Left ventricle myocardium inferior (tissue), 1 donor: ENCODE measurements at regions of chr11 and their contacts with region 1.

Region 1: GRCh38 chr11:25981998-25982397 is 349.9 kb upstream of the ANO3 start:
- DNase-seq: no peak
- H3K4me3 ChIP-seq: no peak overlapping the region
- H3K27ac ChIP-seq: no peak overlapping the region
- H3K4me1 ChIP-seq: no peaks in the 10 kb centered on the region
- H3K27me3 ChIP-seq: no peaks in the 10 kb centered on the region
- CTCF ChIP-seq: peak; percentile 70

Region 2: GRCh38 chr11:26134481-26135355 is 152.7 kb after region 1 on chr11:
- intact Hi-C with region 1: loop called (anchors 2 kb)
- DNase-seq: no peak
- H3K4me3 ChIP-seq: no peak overlapping the region
- H3K27ac ChIP-seq: no peak overlapping the region
- H3K4me1 ChIP-seq: no peaks in the 10 kb centered on the region
- H3K27me3 ChIP-seq: no peaks in the 10 kb centered on the region
- CTCF ChIP-seq: peak; percentile 59

Region 3: GRCh38 chr11:26227296-26227695 is 245.3 kb after region 1 on chr11:
- intact Hi-C with region 1: loop called (anchors 5 kb)
- DNase-seq: no peak
- H3K4me3 ChIP-seq: no peak overlapping the region
- H3K27ac ChIP-seq: no peak overlapping the region
- H3K4me1 ChIP-seq: no peaks in the 10 kb centered on the region
- H3K27me3 ChIP-seq: no peaks in the 10 kb centered on the region
- CTCF ChIP-seq: peak; percentile 58

Region 4: GRCh38 chr11:26276798-26277424 is 294.9 kb after region 1 on chr11:
- intact Hi-C with region 1: loop called (anchors 5 kb)
- DNase-seq: peak; percentile 20
- H3K4me3 ChIP-seq: no peak overlapping the region
- H3K27ac ChIP-seq: no peak overlapping the region
- H3K4me1 ChIP-seq: no peaks in the 10 kb centered on the region
- H3K27me3 ChIP-seq: peaks cover 25% of the 10 kb centered on the region
- CTCF ChIP-seq: peak; percentile 97